Brain microvascular endothelial cell (primary cell): ENCODE measurements at regions of chr2 and their contacts with region 1.

Region 1: DNA sequence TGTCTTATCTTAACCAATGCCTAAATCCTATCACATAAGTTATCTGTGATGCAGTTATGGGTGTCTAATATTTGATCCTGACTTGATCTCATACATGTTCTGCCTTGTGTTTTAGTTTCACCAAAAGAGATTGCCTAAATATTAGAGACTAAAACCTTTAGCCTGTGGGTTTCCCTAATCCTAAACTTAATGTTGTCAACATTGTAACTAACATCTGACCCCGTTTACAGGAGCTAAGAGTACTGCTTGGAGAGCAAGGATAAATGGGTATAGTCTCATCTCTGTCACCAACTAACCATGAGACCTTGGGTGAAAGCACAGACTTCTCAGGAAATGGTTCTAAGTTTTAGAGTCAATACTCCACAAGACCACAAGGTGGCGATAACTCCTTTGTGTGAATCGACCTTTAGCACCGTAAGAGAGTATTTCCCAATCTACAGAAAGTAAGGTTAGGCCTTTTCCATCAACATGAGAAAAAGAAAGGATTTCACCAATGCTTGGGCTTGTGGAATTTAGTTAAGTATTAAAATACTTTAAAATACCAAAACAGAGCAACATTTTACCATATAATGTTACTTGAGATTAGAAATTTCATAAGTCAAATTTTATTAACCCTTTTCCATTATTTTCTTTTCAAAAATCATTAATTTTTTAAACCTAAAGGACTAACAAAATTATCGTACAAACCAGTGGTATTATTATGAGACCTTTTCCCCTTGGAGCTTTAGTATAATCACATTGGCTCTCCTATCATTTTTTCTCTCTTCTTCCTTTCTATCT is 60.5 kb downstream of the G6PC2 start:
- DNase-seq: peak; percentile 81
- H3K4me3 ChIP-seq: no peak overlapping the region
- H3K27ac ChIP-seq: no peak overlapping the region
- H3K27me3 ChIP-seq: no peaks in the 10 kb centered on the region
- CTCF ChIP-seq: peak; percentile 75

Region 2: DNA sequence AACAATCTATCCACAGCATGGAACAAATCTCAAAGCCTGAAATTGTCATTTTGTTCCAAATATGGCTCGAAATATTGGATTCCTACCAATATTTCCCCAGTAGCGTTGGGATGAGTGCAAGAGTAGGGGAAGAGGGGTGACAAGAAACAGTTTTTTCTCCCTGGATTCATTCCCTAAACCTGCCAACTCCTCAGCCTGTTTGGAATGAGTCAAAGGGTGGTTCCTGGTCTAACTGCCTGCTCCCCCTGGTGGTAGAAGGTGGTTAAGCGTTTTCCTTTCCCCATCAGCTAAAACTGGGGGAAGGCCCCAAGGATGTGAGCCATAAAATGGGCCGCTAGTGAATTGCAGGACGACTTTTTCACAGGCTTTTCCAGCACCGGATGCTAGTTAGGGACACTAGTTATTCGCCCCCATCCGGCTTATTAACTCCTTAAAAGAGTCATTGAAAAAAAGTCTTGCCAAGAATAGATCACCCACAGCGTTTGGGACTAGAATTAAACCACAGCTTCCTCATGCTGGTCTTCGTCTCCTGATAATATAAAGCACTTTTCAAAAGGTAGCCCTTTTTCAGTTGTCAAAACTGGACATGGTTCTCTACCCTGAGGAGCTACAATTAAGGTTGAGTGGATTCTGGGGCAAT is 180.2 kb after region 1 on chr2:
- in situ Hi-C with region 1: loop called (anchors 25 kb)
- DNase-seq: peak; percentile 62
- H3K4me3 ChIP-seq: no peak overlapping the region
- H3K27ac ChIP-seq: no peak overlapping the region
- H3K27me3 ChIP-seq: no peaks in the 10 kb centered on the region
- CTCF ChIP-seq: peak; percentile 95

Region 3: GRCh38 chr2:169285531-169286235 is 324.0 kb after region 1 on chr2:
- in situ Hi-C with region 1: no loop called
- DNase-seq: no peak
- H3K4me3 ChIP-seq: no peak overlapping the region
- H3K27ac ChIP-seq: no peak overlapping the region
- H3K27me3 ChIP-seq: no peaks in the 10 kb centered on the region
- CTCF ChIP-seq: no peak